Activated naive CD4-positive, alpha-beta T cell treated with anti-CD3 and anti-CD28 coated beads for 36 hours (primary cell): ENCODE measurements at regions of chr20 and their contacts with region 1.

Region 1: GRCh38 chr20:32674362-32674789 is 635 bp upstream of the C20orf203 start:
- DNase-seq: peak; percentile 89
- H3K4me3 Mint-ChIP-seq: no peak overlapping the region
- H3K27ac Mint-ChIP-seq: no peak overlapping the region
- H3K4me1 Mint-ChIP-seq: peaks cover 15% of the 10 kb centered on the region
- H3K27me3 Mint-ChIP-seq: no peaks in the 10 kb centered on the region

Region 2: DNA sequence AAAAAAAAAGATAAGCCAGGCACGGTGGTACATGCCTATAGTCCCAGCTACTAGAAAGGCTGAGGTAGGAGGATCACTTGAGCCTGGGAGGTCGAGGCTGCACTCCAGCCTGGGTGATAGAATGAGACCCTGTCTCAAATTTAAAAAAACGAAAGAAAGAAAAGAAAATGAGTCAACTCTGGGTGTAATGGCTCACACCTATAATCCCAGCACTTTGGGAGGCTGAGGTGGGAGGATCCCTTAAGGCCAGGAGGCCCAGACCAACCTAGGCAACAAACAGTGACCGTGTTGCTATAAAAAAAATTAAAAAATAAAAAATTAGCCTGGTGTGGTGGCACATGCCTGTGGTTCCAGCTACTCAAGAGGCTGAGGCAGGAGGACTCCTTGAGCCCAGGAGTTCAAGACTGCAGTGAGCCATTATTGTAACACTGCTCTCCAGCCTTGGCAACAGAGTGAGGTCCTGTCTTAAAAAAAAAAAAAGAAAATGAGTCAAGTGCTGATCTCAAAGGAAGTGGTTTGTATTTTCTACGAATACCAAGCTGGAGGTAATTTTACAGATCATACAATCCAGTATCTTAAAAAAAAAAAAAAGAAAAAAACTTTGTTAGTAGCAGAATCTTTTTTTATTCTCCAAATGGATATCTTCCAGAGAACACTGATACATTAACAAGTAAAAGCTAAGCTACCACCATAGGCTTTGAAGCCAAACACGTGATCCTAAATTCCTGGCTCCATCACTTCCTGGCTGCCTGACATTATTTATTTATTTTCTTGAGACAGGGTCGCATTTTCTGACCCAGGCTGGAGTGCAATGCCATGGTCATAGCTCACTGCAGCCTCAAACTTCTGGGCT is 63.2 kb after region 1 on chr20:
- CTCF ChIA-PET with region 1: interaction called, 23 read pairs
- intact Hi-C with region 1: loop called (anchors 2 kb)
- DNase-seq: peak; percentile 62
- H3K4me3 Mint-ChIP-seq: peak overlapping the region; percentile 9
- H3K27ac Mint-ChIP-seq: peak overlapping the region; percentile 79
- H3K4me1 Mint-ChIP-seq: peaks cover 44% of the 10 kb centered on the region
- H3K27me3 Mint-ChIP-seq: no peaks in the 10 kb centered on the region

Region 3: DNA sequence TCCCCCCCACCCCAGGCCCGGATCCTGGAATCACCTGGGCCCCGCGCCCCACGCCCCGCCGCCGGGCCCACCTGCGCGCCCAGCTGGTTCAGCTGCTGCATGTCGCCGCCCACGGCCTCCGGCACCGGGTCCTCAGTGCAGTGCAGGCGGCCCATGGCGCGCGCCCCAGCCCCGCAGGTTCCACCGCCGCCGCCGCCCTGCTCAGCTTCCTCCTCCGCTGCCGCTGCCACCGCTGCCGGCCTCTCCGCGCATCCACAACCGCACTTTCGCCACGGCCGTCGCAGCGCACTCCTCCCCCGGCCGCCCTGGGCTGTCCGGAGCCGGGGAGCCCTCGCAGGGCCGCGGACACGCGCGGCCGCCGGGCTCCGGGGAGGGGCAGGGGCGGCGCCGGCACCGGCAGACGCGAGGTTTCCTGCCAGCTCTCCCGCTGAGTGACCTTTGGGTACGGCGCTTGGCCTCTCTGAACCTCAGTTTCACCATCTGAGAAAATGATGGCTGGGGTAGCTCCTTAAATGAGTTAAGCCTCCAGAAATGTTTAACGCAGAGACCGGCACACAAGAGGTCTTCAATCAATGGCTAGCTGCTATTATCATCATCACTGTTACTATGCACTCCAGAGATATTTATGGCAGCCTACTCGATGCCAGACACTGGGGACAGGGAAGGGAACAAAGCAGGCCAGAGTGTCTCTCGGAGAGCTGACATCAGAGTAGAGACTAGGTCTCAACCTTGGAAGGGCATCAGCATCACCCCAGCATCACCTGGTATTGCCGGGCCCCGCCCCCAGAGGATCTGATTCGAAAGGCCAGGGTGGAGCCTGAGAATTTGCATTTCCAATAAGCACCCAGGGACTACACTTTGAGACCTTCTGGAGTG is 69.1 kb after region 1 on chr20 and contains the start of gene COMMD7:
- CTCF ChIA-PET with region 1: interaction called, 23 read pairs
- intact Hi-C with region 1: loop called (anchors 2 kb)
- DNase-seq: peak; percentile 93
- H3K4me3 Mint-ChIP-seq: peak within 1 kb of the TSS; percentile 94
- H3K27ac Mint-ChIP-seq: peak within 1 kb of the TSS; percentile 95
- H3K4me1 Mint-ChIP-seq: peaks cover 34% of the 10 kb centered on the region
- H3K27me3 Mint-ChIP-seq: no peaks in the 10 kb centered on the region
- total RNA-seq, gene COMMD7: 33.8 to 36.6 TPM

Region 4: GRCh38 chr20:32762149-32762753 is 87.9 kb after region 1 on chr20 and contains the start of gene DNMT3B:
- CTCF ChIA-PET with region 1: interaction called, 5 read pairs
- intact Hi-C with region 1: loop called (anchors 5 kb)
- DNase-seq: peak; percentile 79
- H3K4me3 Mint-ChIP-seq: peak within 1 kb of the TSS; percentile 79
- H3K27ac Mint-ChIP-seq: no peak within 1 kb of the TSS
- H3K4me1 Mint-ChIP-seq: peaks cover 12% of the 10 kb centered on the region
- H3K27me3 Mint-ChIP-seq: no peaks in the 10 kb centered on the region
- total RNA-seq, gene DNMT3B: 2.0 to 2.2 TPM

Region 5: DNA sequence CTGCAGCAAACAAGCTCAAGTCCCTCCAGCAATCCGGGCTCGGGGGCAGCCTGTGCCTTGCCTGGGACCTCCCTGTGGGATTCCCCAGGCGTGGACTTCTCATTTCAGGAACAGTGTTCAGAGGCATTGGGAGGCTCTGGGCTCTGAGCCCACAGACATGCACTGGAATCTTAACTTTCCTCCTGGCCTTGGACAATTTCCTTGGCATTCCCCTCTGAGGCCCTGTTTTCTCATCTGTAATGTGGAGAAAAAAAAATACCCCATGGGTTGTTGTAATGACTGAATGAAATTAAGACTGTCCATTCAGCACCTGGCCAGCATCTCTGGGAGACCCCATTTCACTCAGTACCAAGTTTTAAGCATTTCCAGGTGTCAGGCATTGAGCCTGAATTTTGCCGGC is 422.6 kb after region 1 on chr20:
- CTCF ChIA-PET with region 1: interaction called, 6 read pairs
- intact Hi-C with region 1: loop called (anchors 10 kb)
- DNase-seq: no peak
- H3K4me3 Mint-ChIP-seq: no peak overlapping the region
- H3K27ac Mint-ChIP-seq: no peak overlapping the region
- H3K4me1 Mint-ChIP-seq: peaks cover 2% of the 10 kb centered on the region
- H3K27me3 Mint-ChIP-seq: no peaks in the 10 kb centered on the region

Region 6: GRCh38 chr20:33299111-33299603 is 624.8 kb after region 1 on chr20:
- CTCF ChIA-PET with region 1: no interaction called
- intact Hi-C with region 1: loop called (anchors 10 kb)
- DNase-seq: peak; percentile 76
- H3K4me3 Mint-ChIP-seq: no peak overlapping the region
- H3K27ac Mint-ChIP-seq: no peak overlapping the region
- H3K4me1 Mint-ChIP-seq: peaks cover 2% of the 10 kb centered on the region
- H3K27me3 Mint-ChIP-seq: peaks cover 1% of the 10 kb centered on the region